A673 (cell line): ENCODE measurements at regions of chr11 and their contacts with region 1.

Region 1: GRCh38 chr11:33802414-33802950 is 28.2 kb upstream of the FBXO3 start:
- DNase-seq: peak; percentile 98
- H3K4me3 ChIP-seq: peak overlapping the region; percentile 36
- H3K27ac ChIP-seq: no peak overlapping the region
- H3K4me1 ChIP-seq: peaks cover 12% of the 10 kb centered on the region
- H3K27me3 ChIP-seq: no peaks in the 10 kb centered on the region
- CTCF ChIP-seq: no peak

Region 2: GRCh38 chr11:33778675-33779074 is 23.8 kb before region 1 on chr11:
- CTCF ChIA-PET with region 1: no interaction called
- POLR2A ChIA-PET with region 1: no interaction called
- intact Hi-C with region 1: loop called (anchors 1 kb)
- DNase-seq: peak; percentile 88
- H3K4me3 ChIP-seq: peak overlapping the region; percentile 13
- H3K27ac ChIP-seq: no peak overlapping the region
- H3K4me1 ChIP-seq: peaks cover 36% of the 10 kb centered on the region
- H3K27me3 ChIP-seq: no peaks in the 10 kb centered on the region
- CTCF ChIP-seq: no peak